ENCODE measurements at regions of chr17 and their contacts with region 1.

Region 1: DNA sequence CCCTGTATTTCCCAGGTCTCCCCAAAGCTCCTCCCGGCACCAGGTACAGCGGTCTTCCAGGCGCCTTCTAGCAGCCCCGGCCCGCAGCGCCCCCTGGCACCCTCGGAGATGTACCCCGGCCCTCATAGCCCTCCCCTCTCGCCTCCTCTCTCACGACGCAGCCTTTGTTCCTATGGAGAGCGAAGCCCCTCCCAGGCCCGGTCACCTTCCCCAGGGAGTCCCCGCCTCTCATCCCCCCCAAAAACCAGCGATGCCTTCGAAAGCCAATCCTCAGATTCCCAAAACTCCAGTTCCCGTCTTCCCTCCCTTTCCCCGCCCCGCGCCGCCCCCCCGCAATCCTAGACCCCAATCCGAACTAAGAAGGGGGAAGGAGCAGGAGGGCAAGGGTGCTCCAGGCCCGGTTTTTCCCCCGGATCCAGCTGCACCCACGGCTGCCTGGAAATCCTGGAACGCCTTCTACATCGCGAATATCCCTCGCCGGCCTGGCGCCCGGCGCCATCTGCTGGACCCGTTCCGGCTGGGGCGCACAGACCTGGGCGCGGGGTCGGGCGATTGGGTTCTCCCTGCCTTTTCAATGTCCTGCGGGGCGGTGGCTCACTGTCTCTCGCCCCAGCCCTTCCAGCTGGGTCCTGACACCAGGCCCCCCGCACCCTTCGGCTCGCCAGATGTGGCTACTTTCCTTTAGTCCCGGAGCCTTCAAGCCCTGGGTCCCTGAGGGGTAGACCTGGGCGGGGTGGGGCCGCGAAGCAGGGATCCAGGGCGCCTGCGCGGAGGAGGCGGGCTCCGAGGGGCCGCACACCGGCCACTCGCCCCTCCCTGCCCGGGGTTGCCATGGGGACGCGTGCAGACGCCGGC is at the start of gene DNAH2:
- DNase-seq: peak; percentile 35
- ATAC-seq: peak; percentile 95
- H3K4me3 ChIP-seq: peak within 1 kb of the TSS; percentile 55 to 64
- H3K27ac ChIP-seq: peak within 1 kb of the TSS; percentile 64
- H3K4me1 ChIP-seq: peaks cover 5% of the 10 kb centered on the region
- H3K27me3 ChIP-seq: no peaks in the 10 kb centered on the region
- CTCF ChIP-seq: peak; percentile 87
- total RNA-seq, gene DNAH2: 0.13 TPM

Region 2: GRCh38 chr17:7818746-7819645 is 101.9 kb after region 1 on chr17:
- CTCF ChIA-PET with region 1: no interaction called
- POLR2A ChIA-PET with region 1: interaction called, 11 read pairs
- in situ Hi-C with region 1: no loop called
- intact Hi-C with region 1: no loop called
- DNase-seq: no peak
- ATAC-seq: no peak
- H3K4me3 ChIP-seq: no peak overlapping the region
- H3K27ac ChIP-seq: no peak overlapping the region
- H3K4me1 ChIP-seq: no peaks in the 10 kb centered on the region
- H3K27me3 ChIP-seq: no peaks in the 10 kb centered on the region
- CTCF ChIP-seq: no peak

Region 3: GRCh38 chr17:7972131-7972785 is 255.1 kb after region 1 on chr17:
- CTCF ChIA-PET with region 1: no interaction called
- POLR2A ChIA-PET with region 1: interaction called, 10 read pairs
- in situ Hi-C with region 1: no loop called
- intact Hi-C with region 1: no loop called
- DNase-seq: no peak
- ATAC-seq: no peak
- H3K4me3 ChIP-seq: no peak overlapping the region
- H3K27ac ChIP-seq: no peak overlapping the region
- H3K4me1 ChIP-seq: no peaks in the 10 kb centered on the region
- H3K27me3 ChIP-seq: no peaks in the 10 kb centered on the region
- CTCF ChIP-seq: no peak

Region 4: GRCh38 chr17:8019665-8020064 is 302.5 kb after region 1 on chr17:
- CTCF ChIA-PET with region 1: interaction called, 10 read pairs
- POLR2A ChIA-PET with region 1: no interaction called
- in situ Hi-C with region 1: no loop called
- intact Hi-C with region 1: no loop called
- DNase-seq: no peak
- ATAC-seq: no peak
- H3K4me3 ChIP-seq: no peak overlapping the region
- H3K27ac ChIP-seq: no peak overlapping the region
- H3K4me1 ChIP-seq: no peaks in the 10 kb centered on the region
- H3K27me3 ChIP-seq: no peaks in the 10 kb centered on the region
- CTCF ChIP-seq: no peak